Transverse colon (tissue), 4 donors: ENCODE measurements at regions of chr1 and their contacts with region 1.

Region 1: GRCh38 chr1:35451125-35451528 is 106.1 kb downstream of the KIAA0319L start:
- DNase-seq: peak; percentile 79
- H3K4me3 ChIP-seq: no peak overlapping the region
- H3K27ac ChIP-seq: peak overlapping the region in 3 of 4 donors; percentile 48 to 69 (median 51)
- H3K4me1 ChIP-seq: peaks cover 7 to 27% (median 13%) of the 10 kb centered on the region in 4 donors
- H3K27me3 ChIP-seq: no peaks in the 10 kb centered on the region
- CTCF ChIP-seq: peak; percentile 70 to 82 (median 78)
- EP300 ChIP-seq: no peak
- POLR2A ChIP-seq: no peak

Region 2: DNA sequence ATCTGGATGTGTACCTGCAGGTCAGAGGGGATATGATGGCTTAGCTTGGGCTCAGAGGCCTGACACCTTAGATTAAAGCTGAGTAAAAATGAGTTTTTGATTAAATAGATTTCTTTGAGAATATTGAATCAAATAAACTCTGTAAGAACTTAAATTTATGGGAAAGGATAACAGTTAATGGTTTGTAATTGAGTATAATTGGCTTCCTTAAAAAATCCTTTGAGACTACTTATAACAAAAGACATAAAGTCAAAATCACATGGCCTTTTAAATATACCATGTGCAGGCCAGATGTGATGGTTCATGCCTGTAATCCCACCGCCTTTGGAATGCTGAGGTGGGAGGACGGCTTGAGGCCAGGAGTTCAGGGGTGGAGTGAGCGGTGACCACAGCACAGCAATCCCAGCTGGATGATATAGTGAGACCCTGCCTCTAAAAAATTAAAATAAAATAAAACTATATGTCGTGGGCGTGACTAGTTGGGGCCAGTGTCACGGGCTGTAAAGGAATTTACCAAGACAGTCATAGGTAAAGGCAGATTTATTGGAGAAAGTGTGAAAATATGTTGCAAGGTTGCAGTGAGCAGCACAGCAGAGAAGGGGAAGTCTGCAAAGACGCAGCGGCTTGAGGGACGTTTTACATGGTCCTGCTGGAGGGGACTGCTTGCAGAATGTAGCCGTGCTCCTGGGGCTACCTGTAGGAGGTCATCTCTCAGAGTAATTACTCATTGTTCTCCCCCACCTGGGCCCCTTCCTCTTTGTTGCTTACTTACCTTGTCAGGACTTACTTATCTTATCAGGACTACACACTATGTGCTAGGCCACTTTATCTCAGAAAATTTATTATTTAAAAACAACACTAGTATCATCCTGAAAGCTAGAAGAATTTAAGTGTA is 60.3 kb before region 1 on chr1:
- in situ Hi-C with region 1: no loop called
- intact Hi-C with region 1: no loop called
- DNase-seq: no peak
- H3K4me3 ChIP-seq: no peak overlapping the region
- H3K27ac ChIP-seq: no peak overlapping the region
- H3K4me1 ChIP-seq: no peaks in the 10 kb centered on the region
- H3K27me3 ChIP-seq: no peaks in the 10 kb centered on the region
- CTCF ChIP-seq: no peak
- EP300 ChIP-seq: no peak
- POLR2A ChIP-seq: no peak

Region 3: DNA sequence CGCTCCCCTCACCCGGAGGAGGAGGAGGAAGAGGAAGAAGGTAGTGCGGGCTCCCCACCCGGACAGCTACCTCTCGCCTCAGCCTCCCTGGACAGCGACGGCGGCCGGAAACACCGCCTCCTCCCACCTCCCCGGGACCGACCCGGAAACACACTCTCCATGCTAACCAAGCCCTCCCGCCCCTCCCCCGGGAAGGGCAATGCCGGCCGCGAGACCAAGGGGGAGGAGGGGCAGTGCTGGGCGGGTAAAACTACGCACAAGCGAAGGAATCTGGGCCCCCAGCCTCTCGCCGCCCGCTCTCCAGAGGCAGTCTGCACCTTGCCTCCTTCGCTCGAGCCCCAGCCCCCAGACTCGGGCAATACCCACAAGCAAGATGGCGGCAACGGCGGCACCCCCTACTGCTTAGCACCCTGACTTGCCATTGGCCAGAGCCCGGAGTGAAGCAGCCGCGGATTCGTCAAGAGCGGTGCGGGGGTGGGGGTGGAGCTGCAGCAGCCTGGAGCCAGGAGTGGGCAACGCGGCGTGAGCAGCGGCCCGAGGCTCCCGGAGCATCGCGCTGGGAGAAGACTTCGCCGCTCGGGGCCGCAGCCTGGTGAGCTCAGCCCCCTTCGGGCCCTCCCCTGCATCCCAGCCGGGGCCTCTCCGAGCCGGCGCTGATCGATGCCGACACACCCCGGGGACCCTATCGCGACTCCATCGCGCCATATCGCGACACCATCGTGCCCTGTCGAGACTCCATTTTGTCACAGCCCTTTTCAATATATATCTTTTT is 106.4 kb after region 1 on chr1 and contains the starts of genes KIAA0319L and NCDN:
- in situ Hi-C with region 1: loop called in 3 of 4 experiments (anchors 5 to 25 kb)
- intact Hi-C with region 1: loop called (anchors 5 kb)
- DNase-seq: peak; percentile 97
- H3K4me3 ChIP-seq: peak within 1 kb of the TSS; percentile 60 to 89 (median 70)
- H3K27ac ChIP-seq: peak within 1 kb of the TSS; percentile 88 to 96 (median 95)
- H3K4me1 ChIP-seq: peaks cover 17 to 43% (median 37%) of the 10 kb centered on the region in 4 donors
- H3K27me3 ChIP-seq: no peaks in the 10 kb centered on the region
- CTCF ChIP-seq: no peak
- EP300 ChIP-seq: no peak
- POLR2A ChIP-seq: peak; percentile 68
- total RNA-seq, gene KIAA0319L: 91.7 to 112 (median 97.6) TPM
- total RNA-seq, gene NCDN: 6.7 to 11.3 (median 9.5) TPM

Region 4: DNA sequence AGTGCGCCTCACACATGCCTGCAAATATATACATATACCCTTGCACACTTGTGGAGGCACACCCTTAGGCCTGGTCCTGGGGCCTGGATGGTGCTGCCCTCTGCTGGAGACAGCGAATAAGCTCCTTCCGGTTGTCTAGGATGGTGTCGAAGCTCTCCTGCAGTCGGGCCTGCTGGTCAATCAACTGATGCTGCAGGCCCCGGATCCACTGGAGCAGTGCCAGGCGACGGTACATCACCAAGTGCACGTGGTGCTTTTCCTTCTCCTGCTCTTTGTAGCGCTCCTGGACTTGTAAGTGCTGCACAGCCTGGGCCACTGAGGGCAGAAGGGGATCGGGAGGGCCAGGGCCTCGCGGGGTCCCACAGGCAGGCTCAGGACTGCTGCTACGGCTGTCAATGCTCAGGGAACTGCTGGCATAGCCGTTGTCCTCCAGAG is 264.5 kb after region 1 on chr1:
- in situ Hi-C with region 1: loop called in 1 of 4 experiments (anchors 25 kb)
- intact Hi-C with region 1: loop called (anchors 10 kb)
- DNase-seq: peak; percentile 80
- H3K4me3 ChIP-seq: no peak overlapping the region
- H3K27ac ChIP-seq: no peak overlapping the region
- H3K4me1 ChIP-seq: peaks cover 12 to 38% (median 18%) of the 10 kb centered on the region in 4 donors
- H3K27me3 ChIP-seq: no peaks in the 10 kb centered on the region
- CTCF ChIP-seq: peak; percentile 62 to 89 (median 80)
- EP300 ChIP-seq: no peak
- POLR2A ChIP-seq: no peak

Region 5: DNA sequence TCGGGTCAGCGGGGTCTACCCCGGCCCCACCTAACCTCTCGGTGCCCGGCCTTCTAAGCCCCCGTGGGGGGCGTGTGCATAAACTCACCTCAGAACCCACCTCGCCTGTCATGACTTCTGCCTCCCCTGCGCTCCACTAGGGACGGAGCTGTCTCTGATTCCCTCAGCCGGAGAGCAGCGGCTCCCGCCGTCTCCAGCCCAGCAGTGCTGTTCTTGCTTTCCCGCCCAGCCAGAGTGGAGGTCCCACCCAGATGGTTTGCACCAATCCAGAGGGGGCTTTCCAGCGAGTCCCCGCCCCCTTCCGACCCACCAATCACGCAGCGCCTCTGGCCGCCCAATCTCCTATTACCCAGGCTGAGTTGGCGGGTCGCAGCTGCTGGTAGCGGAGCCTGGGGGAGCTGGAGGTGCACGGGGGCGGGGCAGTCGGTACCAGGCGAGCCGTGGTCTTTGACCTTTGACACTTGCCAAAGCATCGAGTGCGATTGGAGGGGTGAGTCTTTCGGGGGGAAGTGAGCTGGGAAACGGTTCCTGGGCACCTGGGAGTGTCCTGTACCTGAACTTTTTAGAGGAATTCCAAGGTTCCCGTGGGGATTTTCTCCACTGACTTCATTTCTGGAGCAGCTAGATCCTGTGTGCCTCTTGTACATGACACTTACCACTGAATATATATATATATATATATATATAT is 318.8 kb after region 1 on chr1 and contains the start of gene CLSPN:
- in situ Hi-C with region 1: loop called in 1 of 4 experiments (anchors 25 kb)
- intact Hi-C with region 1: no loop called
- DNase-seq: peak; percentile 96
- H3K4me3 ChIP-seq: peak within 1 kb of the TSS; percentile 59 to 99 (median 84)
- H3K27ac ChIP-seq: peak within 1 kb of the TSS; percentile 82 to 91 (median 87)
- H3K4me1 ChIP-seq: peaks cover 0 to 6% (median 1%) of the 10 kb centered on the region in 4 donors
- H3K27me3 ChIP-seq: no peaks in the 10 kb centered on the region
- CTCF ChIP-seq: no peak
- EP300 ChIP-seq: no peak
- POLR2A ChIP-seq: no peak
- total RNA-seq, gene CLSPN: 0.79 to 0.82 TPM in 2 of 4 donors, not detected in the others